Lower lobe of right lung (tissue), 2 donors: ENCODE measurements at regions of chr20 and their contacts with region 1.

Region 1: GRCh38 chr20:22333885-22334545 is 250.4 kb downstream of the FOXA2 start:
- DNase-seq: peak; percentile 54
- ATAC-seq: peak; percentile 84 to 87
- H3K4me3 ChIP-seq: no peak overlapping the region
- H3K27ac ChIP-seq: no peak overlapping the region
- H3K4me1 ChIP-seq: no peaks in the 10 kb centered on the region
- H3K27me3 ChIP-seq: peaks cover 16% of the 10 kb centered on the region
- CTCF ChIP-seq: peak; percentile 80

Region 2: DNA sequence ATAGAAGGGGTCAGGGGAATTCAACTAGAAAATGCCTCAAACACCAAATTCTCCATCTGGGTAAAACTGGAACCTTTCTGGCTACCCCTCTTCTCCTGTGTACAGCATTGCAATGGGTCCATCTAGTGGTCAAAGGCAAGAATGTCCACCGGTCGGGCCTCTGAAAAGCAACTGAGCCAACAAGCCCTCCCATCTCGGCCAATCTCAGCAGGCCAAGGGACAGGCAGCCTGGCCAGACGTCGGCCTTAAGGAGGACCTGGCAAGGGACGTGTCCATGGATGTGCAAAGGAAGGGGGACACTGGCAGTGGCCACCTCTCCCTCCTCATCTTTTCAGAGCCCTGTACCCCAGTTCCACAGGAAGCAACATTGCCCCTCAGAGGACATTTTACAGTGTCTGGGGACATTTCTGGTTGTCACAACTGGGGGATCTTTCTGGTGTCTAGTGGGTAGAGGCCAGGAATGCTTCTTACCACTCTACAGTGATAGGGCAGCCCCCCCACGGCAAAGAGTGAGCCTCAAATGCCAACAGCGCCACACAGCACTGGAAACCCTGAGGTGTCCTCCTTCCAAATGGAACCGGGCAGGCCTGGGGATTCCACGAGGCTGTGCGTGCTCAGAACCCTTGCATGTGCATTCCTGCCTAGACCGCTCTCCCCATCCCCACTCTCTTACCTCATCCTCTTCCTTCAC is 350.2 kb after region 1 on chr20:
- intact Hi-C with region 1: loop called (anchors 10 kb)
- DNase-seq: peak; percentile 62
- ATAC-seq: peak; percentile 82 to 86
- H3K4me3 ChIP-seq: no peak overlapping the region
- H3K27ac ChIP-seq: no peak overlapping the region
- H3K4me1 ChIP-seq: peaks cover 5% of the 10 kb centered on the region
- H3K27me3 ChIP-seq: no peaks in the 10 kb centered on the region
- CTCF ChIP-seq: peak; percentile 84